SK-N-SH (cell line): ENCODE measurements at regions of chr5 and their contacts with region 1.

Region 1: DNA sequence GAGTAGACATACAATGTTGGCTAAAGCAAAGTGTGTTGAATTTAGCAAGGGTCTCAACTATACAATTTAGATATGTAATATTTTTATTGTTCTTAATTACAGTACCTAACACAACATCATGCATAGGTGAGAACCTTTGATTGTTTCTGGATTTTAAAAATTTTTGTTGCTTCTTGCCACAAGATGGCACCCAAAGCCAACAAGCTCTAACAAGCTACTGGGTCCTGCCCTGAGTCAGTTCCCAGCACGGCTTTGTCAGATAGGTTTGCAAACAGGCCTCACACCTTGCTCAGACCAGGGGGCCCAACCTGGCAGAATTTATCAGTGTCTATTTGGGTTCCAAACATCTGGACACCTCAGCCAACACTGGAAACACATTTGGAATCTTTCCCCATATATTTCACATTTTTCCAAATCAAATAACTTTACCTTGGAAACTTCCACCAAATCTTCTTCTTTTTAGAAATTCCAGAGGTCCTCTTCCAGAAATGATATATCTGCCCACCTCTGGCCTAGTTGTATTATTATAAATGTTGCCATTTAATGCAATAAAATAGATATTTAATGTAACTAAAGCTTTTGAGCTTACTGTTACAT is 49.5 kb upstream of the EGFLAM start:
- DNase-seq: peak; percentile 51
- H3K4me3 ChIP-seq: no peak overlapping the region
- H3K27ac ChIP-seq: no peak overlapping the region
- H3K4me1 ChIP-seq: peaks cover 0 to 6% of the 10 kb centered on the region in 2 experiments; a peak in 2 of 4 replicates
- H3K27me3 ChIP-seq: no peaks in the 10 kb centered on the region
- CTCF ChIP-seq: peak; percentile 58
- EP300 ChIP-seq: no peak
- RAD21 ChIP-seq: peak; percentile 84

Region 2: GRCh38 chr5:38134810-38135209 is 74.1 kb before region 1 on chr5:
- CTCF ChIA-PET with region 1: no interaction called
- POLR2A ChIA-PET with region 1: no interaction called
- DNase-seq: no peak
- H3K4me3 ChIP-seq: no peak overlapping the region
- H3K27ac ChIP-seq: no peak overlapping the region
- H3K4me1 ChIP-seq: no peaks in the 10 kb centered on the region
- H3K27me3 ChIP-seq: peaks cover 65% of the 10 kb centered on the region; the same call in 1 of the 2 replicates
- CTCF ChIP-seq: no peak
- EP300 ChIP-seq: no peak
- RAD21 ChIP-seq: no peak

Region 3: GRCh38 chr5:38193015-38193581 is 15.8 kb before region 1 on chr5:
- CTCF ChIA-PET with region 1: interaction called, 10 read pairs
- POLR2A ChIA-PET with region 1: no interaction called
- DNase-seq: peak; percentile 73
- H3K4me3 ChIP-seq: no peak overlapping the region; a peak in 1 of 4 replicates
- H3K27ac ChIP-seq: no peak overlapping the region
- H3K4me1 ChIP-seq: no peaks in the 10 kb centered on the region
- H3K27me3 ChIP-seq: peaks cover 20% of the 10 kb centered on the region; the same call in 1 of the 2 replicates
- CTCF ChIP-seq: peak; percentile 94
- EP300 ChIP-seq: no peak
- RAD21 ChIP-seq: peak; percentile 90

Region 4: DNA sequence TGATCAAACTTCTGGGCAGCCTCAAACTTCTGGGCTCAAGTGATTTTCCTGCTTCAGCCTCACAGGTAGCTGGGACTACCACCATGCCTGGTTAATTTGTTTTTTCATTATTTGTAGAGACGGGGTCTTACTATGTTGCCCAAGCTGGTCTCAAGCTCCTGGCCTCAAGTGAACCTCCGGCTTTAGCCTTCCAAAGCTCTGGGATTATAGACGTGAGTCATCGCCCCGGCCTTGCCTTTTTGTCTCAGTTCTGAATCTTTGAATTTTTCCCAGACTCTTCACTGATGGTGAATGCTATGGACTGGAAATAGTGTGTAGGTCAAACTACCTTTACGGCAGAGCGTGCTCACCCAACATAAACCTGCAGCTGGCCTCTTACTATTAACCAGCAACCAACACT is 17.2 kb after region 1 on chr5:
- CTCF ChIA-PET with region 1: interaction called, 10 read pairs
- POLR2A ChIA-PET with region 1: no interaction called
- DNase-seq: no peak
- H3K4me3 ChIP-seq: no peak overlapping the region
- H3K27ac ChIP-seq: no peak overlapping the region
- H3K4me1 ChIP-seq: peaks cover 0 to 8% of the 10 kb centered on the region in 2 experiments; a peak in 1 of 4 replicates
- H3K27me3 ChIP-seq: no peaks in the 10 kb centered on the region
- CTCF ChIP-seq: no peak
- EP300 ChIP-seq: no peak
- RAD21 ChIP-seq: no peak

Region 5: GRCh38 chr5:38323645-38324295 is 114.9 kb after region 1 on chr5:
- CTCF ChIA-PET with region 1: no interaction called
- POLR2A ChIA-PET with region 1: no interaction called
- DNase-seq: no peak
- H3K4me3 ChIP-seq: no peak overlapping the region
- H3K27ac ChIP-seq: no peak overlapping the region
- H3K4me1 ChIP-seq: no peaks in the 10 kb centered on the region
- H3K27me3 ChIP-seq: no peaks in the 10 kb centered on the region
- CTCF ChIP-seq: no peak
- EP300 ChIP-seq: no peak
- RAD21 ChIP-seq: no peak